CD8-positive, alpha-beta memory T cell (primary cell): ENCODE measurements at regions of chr17 and their contacts with region 1.

Region 1: GRCh38 chr17:49197346-49197998 is 12.9 kb downstream of the GNGT2 start:
- DNase-seq: no peak
- H3K4me3 ChIP-seq: no peak overlapping the region
- H3K4me3 Mint-ChIP-seq: peak overlapping the region in 1 of 7 donors; percentile 33
- H3K27ac ChIP-seq: no peak overlapping the region
- H3K27ac Mint-ChIP-seq: peak overlapping the region in 4 of 8 donors; percentile 23 to 60 (median 30)
- H3K4me1 ChIP-seq: no peaks in the 10 kb centered on the region
- H3K4me1 Mint-ChIP-seq: peaks cover 9 to 26% (median 23%) of the 10 kb centered on the region in 3 donors
- H3K27me3 ChIP-seq: no peaks in the 10 kb centered on the region
- H3K27me3 Mint-ChIP-seq: peaks cover 0 to 4% of the 10 kb centered on the region in 2 donors

Region 2: DNA sequence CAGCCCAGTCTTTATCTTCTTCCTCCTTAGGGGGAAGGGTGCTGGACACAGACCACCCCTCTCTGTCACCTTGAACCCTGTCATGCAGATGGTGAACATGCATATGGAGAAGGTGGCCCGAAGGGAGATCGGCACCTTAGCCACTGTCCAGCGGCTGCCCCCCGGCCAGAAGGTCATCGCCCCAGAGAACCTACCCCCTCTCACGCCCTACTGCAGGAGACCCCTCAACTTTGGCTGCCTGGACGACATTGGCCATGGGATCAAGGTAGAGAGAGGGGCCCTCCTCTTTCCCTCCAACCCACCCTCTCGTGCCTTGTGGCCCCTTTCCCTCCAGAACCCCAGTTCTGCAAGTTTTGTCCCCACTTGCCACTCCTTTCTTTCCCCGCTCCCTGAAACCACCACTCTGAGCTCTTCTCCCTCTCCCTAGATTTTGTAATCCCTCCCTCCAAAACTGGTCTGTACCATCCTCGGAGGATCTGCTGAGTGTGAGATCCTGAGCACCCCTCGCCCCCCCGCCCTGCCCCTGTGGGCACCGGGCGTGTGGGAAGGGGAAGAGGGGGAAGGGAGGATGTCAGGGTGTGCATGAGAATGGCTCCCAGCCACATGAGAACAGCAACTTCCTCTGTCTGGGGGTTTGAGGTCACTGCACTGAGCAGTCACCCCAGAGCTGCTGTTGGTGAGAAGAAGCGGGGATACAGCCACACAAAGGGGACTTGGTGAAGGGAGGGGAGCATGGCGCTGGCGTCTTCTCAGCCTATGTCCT is 20.4 kb after region 1 on chr17:
- CTCF ChIA-PET with region 1: interaction called, 133 read pairs
- POLR2A ChIA-PET with region 1: interaction called, 35 read pairs
- DNase-seq: peak; percentile 62 to 92 (median 90)
- H3K4me3 ChIP-seq: peak overlapping the region; percentile 49
- H3K4me3 Mint-ChIP-seq: peak overlapping the region; percentile 67 to 88 (median 83)
- H3K27ac ChIP-seq: peak overlapping the region; percentile 59
- H3K27ac Mint-ChIP-seq: peak overlapping the region; percentile 94 to 100 (median 98)
- H3K4me1 ChIP-seq: peaks cover 77% of the 10 kb centered on the region
- H3K4me1 Mint-ChIP-seq: peaks cover 66 to 85% (median 69%) of the 10 kb centered on the region in 3 donors
- H3K27me3 ChIP-seq: no peaks in the 10 kb centered on the region
- H3K27me3 Mint-ChIP-seq: no peaks in the 10 kb centered on the region